Psoas muscle (tissue), 8 donors: ENCODE measurements at regions of chr9 and their contacts with region 1.

Region 1: GRCh38 chr9:77712533-77713130 is 64.5 kb upstream of the GNA14 start:
- DNase-seq: no peak
- ATAC-seq: no peak
- H3K4me3 ChIP-seq: no peak overlapping the region
- H3K27ac ChIP-seq: no peak overlapping the region
- H3K4me1 ChIP-seq: no peaks in the 10 kb centered on the region
- H3K27me3 ChIP-seq: no peaks in the 10 kb centered on the region
- CTCF ChIP-seq: no peak

Region 2: DNA sequence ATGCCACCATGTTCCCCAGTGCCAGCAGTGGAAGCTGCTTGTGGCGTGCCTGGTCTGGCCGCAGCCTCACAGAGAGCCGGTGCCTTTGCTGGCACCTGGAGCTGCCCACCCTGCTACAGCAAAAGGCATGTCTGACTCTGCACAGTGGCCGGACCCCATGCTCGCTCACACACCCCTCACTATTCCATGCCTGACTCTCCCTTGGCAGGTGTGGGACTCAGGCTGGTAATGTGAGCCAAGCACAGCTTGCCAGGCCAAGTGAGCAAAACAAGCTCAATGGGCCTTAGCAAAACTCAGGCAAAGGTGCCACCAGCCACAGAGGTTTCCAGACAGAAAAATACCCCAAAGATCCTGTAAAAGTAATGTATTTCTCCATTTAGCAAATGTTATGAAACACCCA is 80.0 kb before region 1 on chr9:
- intact Hi-C with region 1: loop called in 1 of 2 experiments (anchors 5 kb)
- DNase-seq: no peak
- ATAC-seq: no peak
- H3K4me3 ChIP-seq: no peak overlapping the region
- H3K27ac ChIP-seq: no peak overlapping the region
- H3K4me1 ChIP-seq: no peaks in the 10 kb centered on the region
- H3K27me3 ChIP-seq: no peaks in the 10 kb centered on the region
- CTCF ChIP-seq: no peak